PC-3 (cell line): ENCODE measurements at regions of chr3 and their contacts with region 1.

Region 1: GRCh38 chr3:63818281-63819150 is 583 bp upstream of the C3orf49 start:
- DNase-seq: peak; percentile 54
- ATAC-seq: peak; percentile 58
- H3K4me3 ChIP-seq: no peak overlapping the region
- H3K27ac ChIP-seq: no peak overlapping the region
- H3K4me1 ChIP-seq: no peaks in the 10 kb centered on the region
- H3K27me3 ChIP-seq: no peaks in the 10 kb centered on the region
- CTCF ChIP-seq: peak; percentile 70

Region 2: GRCh38 chr3:63349583-63350521 is 468.7 kb before region 1 on chr3:
- CTCF ChIA-PET with region 1: interaction called, 3 read pairs
- POLR2A ChIA-PET with region 1: no interaction called
- intact Hi-C with region 1: loop called (anchors 1 kb)
- DNase-seq: peak; percentile 77
- ATAC-seq: peak; percentile 84
- H3K4me3 ChIP-seq: no peak overlapping the region
- H3K27ac ChIP-seq: no peak overlapping the region
- H3K4me1 ChIP-seq: peaks cover 15% of the 10 kb centered on the region; the same call in 1 of the 2 replicates
- H3K27me3 ChIP-seq: peaks cover 15% of the 10 kb centered on the region; the same call in 1 of the 2 replicates
- CTCF ChIP-seq: peak; percentile 91

Region 3: GRCh38 chr3:63661248-63661647 is 157.3 kb before region 1 on chr3:
- CTCF ChIA-PET with region 1: no interaction called
- POLR2A ChIA-PET with region 1: no interaction called
- intact Hi-C with region 1: loop called (anchors 5 kb)
- DNase-seq: no peak
- ATAC-seq: no peak
- H3K4me3 ChIP-seq: no peak overlapping the region
- H3K27ac ChIP-seq: no peak overlapping the region
- H3K4me1 ChIP-seq: no peaks in the 10 kb centered on the region
- H3K27me3 ChIP-seq: no peaks in the 10 kb centered on the region
- CTCF ChIP-seq: 0 out of 2 replicates have a peak, but pooled peaks have one; percentile 17